ENCODE measurements at regions of chr20 and their contacts with region 1.

Region 1: GRCh38 chr20:44532259-44532980 is 10.6 kb upstream of the SERINC3 start:
- DNase-seq: no peak
- H3K4me3 Mint-ChIP-seq: no peak overlapping the region
- H3K27ac Mint-ChIP-seq: no peak overlapping the region
- H3K4me1 Mint-ChIP-seq: no peaks in the 10 kb centered on the region
- H3K27me3 Mint-ChIP-seq: peaks cover 5% of the 10 kb centered on the region

Region 2: GRCh38 chr20:44501448-44501847 is 31.0 kb before region 1 on chr20:
- intact Hi-C with region 1: no loop called
- DNase-seq: no peak
- H3K4me3 Mint-ChIP-seq: no peak overlapping the region
- H3K27ac Mint-ChIP-seq: no peak overlapping the region
- H3K4me1 Mint-ChIP-seq: peaks cover 7% of the 10 kb centered on the region
- H3K27me3 Mint-ChIP-seq: no peaks in the 10 kb centered on the region

Region 3: GRCh38 chr20:44576297-44576696 is 43.9 kb after region 1 on chr20:
- intact Hi-C with region 1: loop called (anchors 5 kb)
- DNase-seq: no peak
- H3K4me3 Mint-ChIP-seq: no peak overlapping the region
- H3K27ac Mint-ChIP-seq: peak overlapping the region; percentile 59
- H3K4me1 Mint-ChIP-seq: peaks cover 27% of the 10 kb centered on the region
- H3K27me3 Mint-ChIP-seq: no peaks in the 10 kb centered on the region

Measured in activated T-helper 1 cell treated with anti-CD3 and anti-CD28 coated beads, Interleukin-12 subunit alpha, Interleukin-12 subunit beta, Interleukin-2, Interleukin-4 antibody, amounts not matched to agents 30 ng/mL and 10 ng/mL and 1 ng/mL, durations not matched to agents 14 hours and 24 hours and 36 hours (primary cell).